ENCODE measurements at regions of chr1 and their contacts with region 1.

Region 1: DNA sequence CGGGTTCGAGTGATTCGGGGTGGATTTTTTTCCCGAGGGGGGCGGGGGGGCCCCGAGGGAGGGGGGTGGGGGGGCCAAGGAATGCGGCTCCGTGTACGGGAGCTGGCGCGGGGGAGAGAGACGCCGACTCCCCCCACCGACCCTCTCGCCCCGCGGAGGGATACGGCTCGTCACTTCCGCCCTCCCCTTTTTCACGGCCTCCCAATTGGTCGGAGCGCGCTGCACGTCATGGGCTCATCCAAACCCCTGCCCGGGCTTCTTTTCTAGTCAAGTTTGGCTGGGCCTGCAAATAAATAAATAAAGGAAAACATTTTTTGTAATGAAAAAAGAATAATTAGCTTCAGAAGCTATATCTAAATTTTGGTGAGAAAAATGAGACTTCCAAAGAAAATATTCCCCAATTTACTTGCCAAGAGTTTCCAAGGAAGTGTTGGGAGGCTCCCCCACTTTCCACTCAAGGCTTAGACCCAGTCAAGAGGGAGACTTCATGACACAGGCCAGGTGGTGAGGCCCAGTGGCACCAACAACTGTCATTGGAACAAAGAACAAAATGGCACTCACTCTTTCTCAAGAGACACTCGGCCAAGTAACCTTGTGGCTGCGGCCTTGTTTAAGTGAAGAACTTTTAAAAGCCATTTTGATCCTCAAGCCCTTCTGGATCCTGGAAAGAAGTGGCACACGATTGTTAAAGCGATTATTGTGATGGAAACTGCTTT is at the start of gene POGZ:
- DNase-seq: peak; percentile 95 to 99
- ATAC-seq: peak; percentile 88 to 91
- H3K4me3 ChIP-seq: peak within 1 kb of the TSS; percentile 59
- H3K27ac ChIP-seq: peak within 1 kb of the TSS; percentile 97 to 98
- H3K4me1 ChIP-seq: peaks cover 29% of the 10 kb centered on the region
- CTCF ChIP-seq: no peak
- EP300 ChIP-seq: no peak; a peak in 1 of 5 replicates
- POLR2A ChIP-seq: peak; percentile 30; the same call in 1 of the 2 replicates
- RAD21 ChIP-seq: no peak
- polyA plus RNA-seq, gene POGZ: 44.1 and 64.0 TPM in 2 replicates

Region 2: GRCh38 chr1:151198255-151199127 is 261.0 kb before region 1 on chr1 and contains the start of gene PIP5K1A:
- CTCF ChIA-PET with region 1: no interaction called
- POLR2A ChIA-PET with region 1: no interaction called
- DNase-seq: peak; percentile 98 to 99
- ATAC-seq: peak; percentile 79 to 81
- H3K4me3 ChIP-seq: peak within 1 kb of the TSS; percentile 78
- H3K27ac ChIP-seq: peak within 1 kb of the TSS; percentile 95
- H3K4me1 ChIP-seq: peaks cover 30% of the 10 kb centered on the region
- CTCF ChIP-seq: no peak
- EP300 ChIP-seq: no peak
- POLR2A ChIP-seq: peak; percentile 72
- RAD21 ChIP-seq: no peak
- polyA plus RNA-seq, gene PIP5K1A: 129 and 183 TPM in 2 replicates

Region 3: GRCh38 chr1:151443846-151444782 is 15.4 kb before region 1 on chr1:
- CTCF ChIA-PET with region 1: interaction called, 11 read pairs
- POLR2A ChIA-PET with region 1: interaction called, 6 read pairs
- DNase-seq: peak; percentile 82 to 96
- ATAC-seq: peak; percentile 98 to 99
- H3K4me3 ChIP-seq: no peak overlapping the region
- H3K27ac ChIP-seq: no peak overlapping the region
- H3K4me1 ChIP-seq: peaks cover 20% of the 10 kb centered on the region; the same call in 2 of the 3 replicates
- CTCF ChIP-seq: peak; percentile 84
- EP300 ChIP-seq: no peak
- POLR2A ChIP-seq: no peak
- RAD21 ChIP-seq: peak; percentile 80 to 84

Region 4: GRCh38 chr1:151510957-151511635 is 51.6 kb after region 1 on chr1 and contains the start of gene CGN:
- CTCF ChIA-PET with region 1: no interaction called
- POLR2A ChIA-PET with region 1: interaction called, 15 read pairs
- DNase-seq: peak; percentile 70 to 85
- ATAC-seq: peak; percentile 91 to 97
- H3K4me3 ChIP-seq: peak within 1 kb of the TSS; percentile 64
- H3K27ac ChIP-seq: peak within 1 kb of the TSS; percentile 69 to 86
- H3K4me1 ChIP-seq: peaks cover 36% of the 10 kb centered on the region
- CTCF ChIP-seq: no peak
- EP300 ChIP-seq: no peak
- POLR2A ChIP-seq: 0 out of 2 replicates have a peak, but pooled peaks have one; percentile 25
- RAD21 ChIP-seq: no peak
- polyA plus RNA-seq, gene CGN: 1.8 and 2.1 TPM in 2 replicates

Region 5: GRCh38 chr1:151539990-151540981 is 80.8 kb after region 1 on chr1 and contains the start of gene TUFT1:
- CTCF ChIA-PET with region 1: interaction called, 3 read pairs
- POLR2A ChIA-PET with region 1: interaction called, 11 read pairs
- DNase-seq: peak; percentile 82 to 94
- ATAC-seq: peak; percentile 75 to 88
- H3K4me3 ChIP-seq: peak within 1 kb of the TSS; percentile 93
- H3K27ac ChIP-seq: peak within 1 kb of the TSS; percentile 79 to 85
- H3K4me1 ChIP-seq: peaks cover 71% of the 10 kb centered on the region
- CTCF ChIP-seq: no peak
- EP300 ChIP-seq: no peak
- POLR2A ChIP-seq: peak; percentile 100
- RAD21 ChIP-seq: peak in 1 of 2 experiments; percentile 7; a peak in 2 of 5 replicates
- polyA plus RNA-seq, gene TUFT1: 24.5 and 27.5 TPM in 2 replicates

Measured in A549 (cell line).